Naive thymus-derived CD4-positive, alpha-beta T cell (primary cell): ENCODE measurements at regions of chr3 and their contacts with region 1.

Region 1: DNA sequence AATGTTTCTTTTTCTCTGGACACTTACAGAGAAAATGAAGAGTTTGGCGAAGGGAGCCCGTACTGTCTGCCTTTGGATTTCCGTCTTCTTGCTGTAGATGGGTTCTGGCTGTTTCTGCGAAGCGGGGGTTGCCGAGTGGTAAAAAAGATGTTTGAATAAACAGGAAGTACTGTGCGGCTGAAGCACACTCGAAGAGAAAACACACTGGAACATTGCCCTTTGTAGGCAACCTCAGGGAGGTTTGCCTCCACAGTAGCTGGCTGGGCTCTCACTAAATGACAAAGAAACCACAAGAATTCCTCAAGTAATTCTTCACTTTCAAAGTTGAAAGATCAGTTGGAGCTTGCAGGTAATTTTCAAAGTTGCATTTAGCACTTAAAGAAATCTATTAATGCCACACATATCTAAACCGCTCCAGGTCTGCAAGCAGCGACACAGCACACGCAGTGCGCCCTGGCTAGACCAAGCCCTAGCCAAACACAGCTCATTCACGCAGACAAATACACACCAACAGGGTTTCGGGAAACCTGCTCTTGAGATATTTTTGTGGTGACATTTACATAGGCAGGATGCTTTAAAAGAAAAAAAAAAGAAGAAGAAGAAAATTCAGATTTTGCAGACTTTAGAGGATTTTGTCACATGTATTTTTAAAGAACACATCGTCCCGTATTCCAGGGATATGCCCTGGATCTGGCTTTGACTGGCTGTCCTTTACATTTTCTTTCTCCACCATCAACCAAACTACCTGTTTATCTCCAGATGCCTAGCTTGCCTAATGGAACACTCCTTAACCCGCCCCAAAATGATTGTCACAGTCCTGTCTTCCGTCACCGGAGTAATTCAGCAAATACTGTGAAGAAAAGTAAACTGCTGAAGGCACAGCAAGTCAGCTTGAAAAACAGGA is 452.8 kb downstream of the FOXP1 start:
- DNase-seq: peak; percentile 33 to 90 (median 85)
- ATAC-seq: peak; percentile 86
- H3K4me3 ChIP-seq: peak overlapping the region; percentile 71
- H3K4me3 Mint-ChIP-seq: peak overlapping the region; percentile 85 to 99 (median 93)
- H3K27ac ChIP-seq: peak overlapping the region; percentile 89
- H3K27ac Mint-ChIP-seq: peak overlapping the region; percentile 94 to 99 (median 97)
- H3K4me1 ChIP-seq: peaks cover 42 to 51% of the 10 kb centered on the region in 2 donors
- H3K4me1 Mint-ChIP-seq: peaks cover 49 to 85% (median 80%) of the 10 kb centered on the region in 7 donors
- H3K27me3 ChIP-seq: no peaks in the 10 kb centered on the region
- H3K27me3 Mint-ChIP-seq: no peaks in the 10 kb centered on the region

Region 2: GRCh38 chr3:69339760-69340159 is 1791.0 kb before region 1 on chr3:
- CTCF ChIA-PET with region 1: no interaction called
- POLR2A ChIA-PET with region 1: no interaction called
- intact Hi-C with region 1: no loop called
- DNase-seq: no peak
- ATAC-seq: peak; percentile 61
- H3K4me3 ChIP-seq: no peak overlapping the region
- H3K4me3 Mint-ChIP-seq: no peak overlapping the region
- H3K27ac ChIP-seq: no peak overlapping the region
- H3K27ac Mint-ChIP-seq: no peak overlapping the region
- H3K4me1 ChIP-seq: no peaks in the 10 kb centered on the region
- H3K4me1 Mint-ChIP-seq: peaks cover 0 to 4% (median 0%) of the 10 kb centered on the region in 7 donors
- H3K27me3 ChIP-seq: no peaks in the 10 kb centered on the region
- H3K27me3 Mint-ChIP-seq: peaks cover 0 to 5% (median 0%) of the 10 kb centered on the region in 5 donors

Region 3: DNA sequence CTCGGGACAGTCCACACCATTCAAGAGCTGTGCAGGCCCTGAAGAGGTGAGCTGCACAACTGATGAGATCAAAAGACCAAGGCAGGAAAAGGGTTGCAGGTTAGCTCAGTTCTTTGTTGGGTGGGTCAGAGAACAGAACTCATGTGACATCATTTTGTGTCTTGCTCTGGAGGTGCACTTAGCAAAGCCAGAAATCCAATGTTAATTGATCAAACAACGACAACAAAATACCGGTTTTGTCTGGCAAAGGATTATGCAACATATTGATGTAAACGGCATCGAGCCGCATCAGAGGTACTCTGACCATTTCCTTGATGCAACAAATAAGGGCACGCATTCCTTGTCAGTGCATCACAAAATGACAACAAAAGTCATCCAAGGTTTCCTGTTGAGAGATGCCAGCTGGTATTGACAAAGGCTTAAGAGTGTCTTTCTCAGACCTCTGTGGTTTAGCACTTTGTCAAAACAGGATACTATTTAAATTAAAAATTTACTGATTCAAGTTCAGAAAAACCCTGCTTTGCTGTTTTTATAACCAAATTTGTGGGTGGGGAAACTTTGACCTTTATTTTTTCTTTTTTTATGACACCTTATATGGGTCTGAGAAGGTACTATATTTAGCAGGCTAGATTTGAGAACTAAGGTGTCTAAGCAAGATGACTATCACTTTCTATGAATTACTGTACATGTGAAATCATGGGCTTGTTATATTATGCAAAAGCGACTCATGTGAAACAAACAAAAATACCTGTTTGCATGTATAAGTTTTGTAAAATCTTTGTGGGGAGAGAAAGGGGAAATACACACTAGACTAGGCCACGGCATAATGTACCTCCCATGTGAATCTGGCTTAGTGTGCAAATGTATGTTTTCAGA is 43.3 kb before region 1 on chr3:
- CTCF ChIA-PET with region 1: no interaction called
- POLR2A ChIA-PET with region 1: interaction called, 9 read pairs
- intact Hi-C with region 1: loop called in 1 of 2 experiments (anchors 1 kb)
- DNase-seq: peak in 8 of 9 donors; percentile 39 to 76 (median 58)
- ATAC-seq: peak; percentile 79
- H3K4me3 ChIP-seq: peak overlapping the region; percentile 7
- H3K4me3 Mint-ChIP-seq: peak overlapping the region; percentile 39 to 78 (median 70)
- H3K27ac ChIP-seq: peak overlapping the region; percentile 42
- H3K27ac Mint-ChIP-seq: peak overlapping the region; percentile 43 to 98 (median 92)
- H3K4me1 ChIP-seq: peaks cover 34 to 69% of the 10 kb centered on the region in 2 donors
- H3K4me1 Mint-ChIP-seq: peaks cover 61 to 94% (median 89%) of the 10 kb centered on the region in 7 donors
- H3K27me3 ChIP-seq: no peaks in the 10 kb centered on the region
- H3K27me3 Mint-ChIP-seq: no peaks in the 10 kb centered on the region

Region 4: DNA sequence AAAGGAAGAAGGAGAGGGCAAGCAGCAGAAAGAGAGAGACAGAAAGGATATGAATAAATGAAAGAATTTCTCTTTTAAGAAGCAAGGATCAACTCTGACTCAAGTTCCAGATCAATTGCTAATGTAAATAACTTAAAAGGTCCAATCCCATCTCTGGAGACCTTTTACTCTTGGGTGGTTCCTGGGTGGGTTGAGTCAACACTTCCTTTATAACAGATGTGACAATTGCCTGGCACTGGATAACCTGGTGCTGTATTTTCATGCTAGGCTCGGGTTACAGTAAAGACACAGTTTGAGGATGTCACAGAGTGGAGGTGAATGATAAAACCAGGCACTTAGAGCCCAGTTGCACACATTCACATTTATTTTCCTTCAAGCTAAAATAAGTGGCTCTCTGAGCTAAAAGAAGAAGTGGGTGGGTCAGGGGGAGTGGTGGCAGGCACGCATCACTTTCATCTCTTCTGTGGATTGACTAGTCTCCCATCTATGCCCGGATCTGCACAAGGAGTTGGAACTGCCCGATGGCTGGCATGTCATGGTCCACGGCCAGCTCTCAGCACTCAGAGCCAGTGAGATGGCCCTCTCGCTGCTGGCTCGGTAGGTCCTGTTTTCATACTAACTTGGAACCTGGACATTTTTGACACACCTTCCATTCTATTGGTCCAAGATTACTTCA is 13.0 kb before region 1 on chr3:
- CTCF ChIA-PET with region 1: interaction called, 4 read pairs
- POLR2A ChIA-PET with region 1: interaction called, 11 read pairs
- intact Hi-C with region 1: no loop called
- DNase-seq: no peak
- ATAC-seq: no peak
- H3K4me3 ChIP-seq: no peak overlapping the region
- H3K4me3 Mint-ChIP-seq: peak overlapping the region in 5 of 10 donors; percentile 0 to 52 (median 25)
- H3K27ac ChIP-seq: no peak overlapping the region
- H3K27ac Mint-ChIP-seq: peak overlapping the region in 8 of 9 donors; percentile 43 to 93 (median 80)
- H3K4me1 ChIP-seq: peaks cover 3 to 71% of the 10 kb centered on the region in 2 donors
- H3K4me1 Mint-ChIP-seq: peaks cover 48 to 94% (median 89%) of the 10 kb centered on the region in 7 donors
- H3K27me3 ChIP-seq: no peaks in the 10 kb centered on the region
- H3K27me3 Mint-ChIP-seq: no peaks in the 10 kb centered on the region

Region 5: DNA sequence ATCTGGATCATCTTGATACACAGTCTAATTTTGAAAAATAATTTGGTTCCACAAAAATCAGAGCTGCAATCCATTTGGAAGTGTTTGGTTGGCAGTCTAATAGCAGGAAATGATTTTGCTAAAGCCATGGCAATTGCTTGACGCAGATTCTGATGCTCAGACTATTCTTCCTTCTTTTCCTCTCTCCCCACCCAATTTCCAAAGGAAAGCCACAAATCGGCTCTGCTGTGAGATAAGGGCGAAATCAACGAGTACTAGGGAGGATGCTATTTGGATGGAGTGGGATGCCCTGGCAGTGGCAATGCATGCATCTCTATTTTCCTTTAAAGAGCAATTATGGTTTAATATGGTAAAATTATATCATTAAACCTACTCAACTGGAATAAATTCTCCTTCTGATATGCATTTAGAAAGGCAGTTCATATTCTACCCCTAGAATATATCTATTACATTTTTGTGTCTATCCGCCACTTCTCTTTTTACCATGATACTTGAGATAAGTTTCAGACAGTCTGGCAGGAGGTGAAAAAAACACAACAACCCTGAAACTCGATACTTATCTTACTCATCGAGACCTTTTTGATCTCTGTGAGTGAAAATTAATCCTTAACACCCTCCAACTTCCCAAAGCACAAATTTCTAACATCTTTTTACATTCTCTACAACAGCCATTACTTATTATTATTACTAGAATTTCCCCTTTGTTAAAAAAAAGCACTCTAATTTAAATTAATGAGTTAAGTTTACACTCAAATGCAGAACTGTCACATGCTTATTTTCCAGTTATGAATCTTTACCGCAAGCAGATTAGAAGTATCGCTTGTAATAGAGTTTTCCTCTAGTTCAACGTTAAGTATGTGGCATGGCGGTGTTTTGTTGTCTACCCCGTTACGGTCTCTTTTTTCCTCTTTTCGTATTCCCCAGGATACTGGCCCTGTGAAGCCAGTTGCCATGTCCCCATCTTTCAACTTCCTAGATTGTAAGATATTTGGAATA is 19.5 kb after region 1 on chr3:
- CTCF ChIA-PET with region 1: no interaction called
- POLR2A ChIA-PET with region 1: interaction called, 4 read pairs
- intact Hi-C with region 1: loop called in 1 of 2 experiments (anchors 2 kb)
- DNase-seq: peak in 2 of 9 donors; percentile 22 to 24
- ATAC-seq: peak; percentile 65
- H3K4me3 ChIP-seq: no peak overlapping the region
- H3K4me3 Mint-ChIP-seq: peak overlapping the region in 7 of 10 donors; percentile 15 to 58 (median 45)
- H3K27ac ChIP-seq: peak overlapping the region; percentile 42
- H3K27ac Mint-ChIP-seq: peak overlapping the region in 8 of 9 donors; percentile 40 to 93 (median 86)
- H3K4me1 ChIP-seq: peaks cover 0 to 29% of the 10 kb centered on the region in 2 donors
- H3K4me1 Mint-ChIP-seq: peaks cover 14 to 92% (median 85%) of the 10 kb centered on the region in 7 donors
- H3K27me3 ChIP-seq: no peaks in the 10 kb centered on the region
- H3K27me3 Mint-ChIP-seq: peaks cover 0 to 2% (median 0%) of the 10 kb centered on the region in 5 donors

Region 6: DNA sequence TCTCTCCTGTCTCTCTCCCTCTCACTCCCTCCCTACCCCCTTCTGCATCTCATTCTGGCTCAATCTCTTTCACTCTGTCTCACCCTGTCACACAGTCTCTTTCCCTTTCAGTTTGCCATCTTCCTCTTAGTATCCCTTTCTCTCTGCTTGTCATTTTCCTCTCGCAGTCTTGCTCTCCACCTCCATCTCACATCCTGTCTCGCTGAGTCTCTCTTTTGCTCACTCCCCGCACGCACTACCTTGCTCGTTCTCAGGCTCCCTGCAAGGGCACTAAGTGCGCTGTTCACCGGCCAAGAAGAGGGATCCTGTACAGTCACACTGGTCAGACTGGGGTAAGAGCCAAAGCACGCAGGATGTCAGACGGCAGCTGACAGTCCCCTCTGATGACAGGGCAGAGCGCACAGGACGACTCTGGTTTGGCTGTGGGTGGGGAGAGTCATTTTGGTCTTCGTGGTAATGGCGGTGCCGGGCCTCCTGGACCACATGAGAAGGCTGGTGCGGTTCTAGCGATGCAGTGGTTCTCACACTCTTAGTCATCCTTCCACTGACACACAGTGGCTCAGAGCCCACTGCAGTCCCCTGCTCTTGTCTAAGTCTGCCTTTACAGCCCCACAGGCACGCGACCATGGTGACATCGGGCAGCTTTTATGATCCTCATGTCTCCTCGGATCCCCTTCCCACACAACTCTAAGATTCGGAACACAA is 96.0 kb after region 1 on chr3:
- CTCF ChIA-PET with region 1: no interaction called
- POLR2A ChIA-PET with region 1: no interaction called
- intact Hi-C with region 1: loop called (anchors 1 to 2 kb)
- DNase-seq: peak; percentile 34 to 89 (median 65)
- ATAC-seq: peak; percentile 86
- H3K4me3 ChIP-seq: peak overlapping the region; percentile 48
- H3K4me3 Mint-ChIP-seq: peak overlapping the region; percentile 51 to 85 (median 79)
- H3K27ac ChIP-seq: peak overlapping the region; percentile 59
- H3K27ac Mint-ChIP-seq: peak overlapping the region; percentile 85 to 97 (median 90)
- H3K4me1 ChIP-seq: peaks cover 21 to 64% of the 10 kb centered on the region in 2 donors
- H3K4me1 Mint-ChIP-seq: peaks cover 30 to 91% (median 88%) of the 10 kb centered on the region in 7 donors
- H3K27me3 ChIP-seq: no peaks in the 10 kb centered on the region
- H3K27me3 Mint-ChIP-seq: peaks cover 0 to 52% (median 0%) of the 10 kb centered on the region in 5 donors

Region 7: GRCh38 chr3:71244826-71245488 is 114.2 kb after region 1 on chr3:
- CTCF ChIA-PET with region 1: no interaction called
- POLR2A ChIA-PET with region 1: no interaction called
- intact Hi-C with region 1: no loop called
- DNase-seq: no peak
- ATAC-seq: no peak
- H3K4me3 ChIP-seq: no peak overlapping the region
- H3K4me3 Mint-ChIP-seq: peak overlapping the region in 2 of 10 donors; percentile 19 to 22
- H3K27ac ChIP-seq: no peak overlapping the region
- H3K27ac Mint-ChIP-seq: peak overlapping the region in 8 of 9 donors; percentile 14 to 90 (median 48)
- H3K4me1 ChIP-seq: peaks cover 0 to 23% of the 10 kb centered on the region in 2 donors
- H3K4me1 Mint-ChIP-seq: peaks cover 2 to 94% (median 90%) of the 10 kb centered on the region in 7 donors
- H3K27me3 ChIP-seq: no peaks in the 10 kb centered on the region
- H3K27me3 Mint-ChIP-seq: peaks cover 0 to 4% (median 0%) of the 10 kb centered on the region in 5 donors